Tibial artery (tissue), 4 donors: ENCODE measurements at regions of chr1 and their contacts with region 1.

Region 1: GRCh38 chr1:56578963-56579875 is at the start of gene PLPP3:
- DNase-seq: peak; percentile 90 to 95
- H3K4me3 ChIP-seq: peak within 1 kb of the TSS; percentile 95 to 96
- H3K27ac ChIP-seq: peak within 1 kb of the TSS; percentile 95 to 96
- H3K4me1 ChIP-seq: peaks cover 0 to 35% (median 6%) of the 10 kb centered on the region in 4 donors
- H3K27me3 ChIP-seq: no peaks in the 10 kb centered on the region
- CTCF ChIP-seq: peak; percentile 40 to 48

Region 2: GRCh38 chr1:55375617-55376258 is 1203.5 kb before region 1 on chr1:
- intact Hi-C with region 1: loop called (anchors 5 kb)
- DNase-seq: no peak
- H3K4me3 ChIP-seq: no peak overlapping the region
- H3K27ac ChIP-seq: no peak overlapping the region
- H3K4me1 ChIP-seq: peaks cover 0 to 9% (median 0%) of the 10 kb centered on the region in 4 donors
- H3K27me3 ChIP-seq: no peaks in the 10 kb centered on the region
- CTCF ChIP-seq: peak; percentile 90 to 93

Region 3: DNA sequence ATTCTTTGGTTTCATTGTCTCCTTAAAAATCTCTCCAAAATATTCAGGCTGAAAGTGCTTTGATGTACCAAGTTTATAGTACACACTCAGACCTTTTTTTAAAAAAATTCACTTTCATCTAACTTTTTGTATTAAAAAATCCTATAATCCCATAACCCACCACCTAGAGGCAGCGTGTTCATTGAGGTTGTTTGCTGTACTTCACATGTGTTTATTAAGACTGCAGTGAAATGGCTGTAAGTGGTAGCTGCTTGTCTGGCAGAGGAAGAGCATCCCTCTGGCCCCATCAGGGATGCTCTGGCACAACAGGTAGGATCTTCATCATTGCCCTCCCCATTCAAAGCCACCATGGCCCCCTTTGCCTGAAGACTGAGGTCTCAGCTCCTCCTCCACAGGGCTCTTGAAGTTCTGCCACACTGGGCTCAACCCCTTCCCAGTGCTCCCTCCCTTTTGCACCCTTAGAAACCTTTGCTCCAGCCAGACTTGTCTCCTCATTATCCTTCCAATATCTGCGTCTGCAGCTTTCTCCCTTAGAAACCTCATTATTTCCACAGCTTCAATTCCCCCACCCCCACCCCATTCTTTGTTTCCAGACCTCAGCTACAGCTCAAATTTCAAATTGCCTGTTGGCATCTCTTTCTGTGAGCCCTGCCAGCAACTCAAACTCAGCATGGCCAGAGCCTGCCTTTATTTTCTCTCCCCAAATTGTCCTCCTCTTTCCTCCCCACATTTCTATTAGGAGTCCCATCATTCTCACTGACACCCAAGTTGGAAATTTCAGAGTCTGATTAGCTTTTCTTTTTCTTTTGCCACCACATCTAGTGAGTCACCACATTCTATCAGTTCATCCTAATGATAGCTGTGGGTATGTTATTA is 994.5 kb before region 1 on chr1:
- intact Hi-C with region 1: loop called (anchors 10 kb)
- DNase-seq: peak in 1 of 2 donors; percentile 53
- H3K4me3 ChIP-seq: no peak overlapping the region
- H3K27ac ChIP-seq: peak overlapping the region; percentile 78 to 84
- H3K4me1 ChIP-seq: peaks cover 0 to 100% (median 72%) of the 10 kb centered on the region in 4 donors
- H3K27me3 ChIP-seq: no peaks in the 10 kb centered on the region
- CTCF ChIP-seq: peak in 1 of 2 experiments; percentile 8

Region 4: DNA sequence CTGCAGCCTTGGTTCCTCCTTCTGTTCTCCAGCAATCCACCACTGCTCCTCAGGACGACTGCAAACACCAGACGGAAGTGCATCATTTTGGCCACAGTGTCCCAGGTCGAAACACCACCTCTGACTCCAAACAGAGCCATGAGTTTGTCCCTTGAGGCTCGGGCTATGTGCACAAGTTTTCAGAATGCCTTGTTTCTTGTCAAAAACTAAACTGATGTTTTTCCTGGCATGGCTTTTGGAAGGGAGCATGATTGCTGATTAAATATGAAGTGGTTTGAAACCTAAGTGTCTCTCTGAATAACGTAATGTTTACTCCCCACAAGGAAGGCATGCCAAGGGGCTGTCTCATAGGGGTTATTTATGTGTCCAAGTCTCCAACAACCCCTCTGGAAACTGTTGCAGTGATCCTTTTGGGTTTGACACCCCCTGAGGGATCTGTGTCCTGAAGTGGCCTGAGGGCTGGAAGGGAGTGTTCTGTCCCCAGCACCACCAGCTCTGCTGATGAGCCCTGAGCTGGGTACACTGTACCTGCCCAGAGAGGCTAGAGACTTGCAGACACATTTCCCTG is 132.6 kb before region 1 on chr1:
- intact Hi-C with region 1: loop called (anchors 10 kb)
- DNase-seq: peak; percentile 87 to 93
- H3K4me3 ChIP-seq: no peak overlapping the region
- H3K27ac ChIP-seq: peak overlapping the region; percentile 66
- H3K4me1 ChIP-seq: peaks cover 4 to 42% (median 26%) of the 10 kb centered on the region in 4 donors
- H3K27me3 ChIP-seq: no peaks in the 10 kb centered on the region
- CTCF ChIP-seq: no peak

Region 5: DNA sequence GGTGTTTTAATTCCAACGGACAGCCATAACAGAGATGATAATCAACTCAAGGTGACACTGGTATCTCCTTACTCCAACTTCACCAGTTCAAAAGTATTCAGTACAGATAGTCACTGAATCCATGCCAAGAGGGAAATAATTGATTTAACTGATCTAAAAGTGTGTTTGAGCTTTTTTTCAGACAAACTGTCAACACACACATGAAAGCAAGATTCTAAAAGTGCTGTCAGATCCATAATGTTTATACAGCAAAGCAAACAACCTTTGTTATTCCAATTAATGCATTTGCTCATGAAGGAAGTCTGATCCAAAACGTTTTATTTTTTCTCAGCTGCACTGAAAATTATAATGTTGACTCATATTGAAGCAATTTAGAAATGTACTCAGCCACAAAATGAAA is 60.0 kb after region 1 on chr1:
- intact Hi-C with region 1: no loop called
- DNase-seq: no peak
- H3K4me3 ChIP-seq: no peak overlapping the region
- H3K27ac ChIP-seq: no peak overlapping the region
- H3K4me1 ChIP-seq: peaks cover 0 to under 1% (median 0%) of the 10 kb centered on the region in 4 donors
- H3K27me3 ChIP-seq: no peaks in the 10 kb centered on the region
- CTCF ChIP-seq: no peak